Endothelial cell of umbilical vein (primary cell): ENCODE measurements at regions of chr19 and their contacts with region 1.

Region 1: GRCh38 chr19:45692187-45693105 is at the start of gene QPCTL:
- DNase-seq: peak; percentile 100
- H3K4me3 ChIP-seq: peak within 1 kb of the TSS; percentile 70 to 93 (median 85)
- H3K27ac ChIP-seq: peak within 1 kb of the TSS; percentile 82
- H3K4me1 ChIP-seq: peaks cover 9% of the 10 kb centered on the region
- H3K27me3 ChIP-seq: no peaks in the 10 kb centered on the region
- CTCF ChIP-seq: no peak
- POLR2A ChIP-seq: peak; percentile 76
- total RNA-seq, gene QPCTL: 15.3 and 17.6 TPM in 2 replicates

Region 2: GRCh38 chr19:45423589-45424190 is 268.8 kb before region 1 on chr19 and contains the start of gene ERCC1:
- CTCF ChIA-PET with region 1: no interaction called
- POLR2A ChIA-PET with region 1: no interaction called
- dilution Hi-C with region 1: no loop called
- intact Hi-C with region 1: loop called (anchors 5 kb)
- DNase-seq: peak; percentile 94
- H3K4me3 ChIP-seq: peak within 1 kb of the TSS; percentile 59 to 74 (median 73)
- H3K27ac ChIP-seq: peak within 1 kb of the TSS; percentile 100
- H3K4me1 ChIP-seq: peaks cover 30% of the 10 kb centered on the region
- H3K27me3 ChIP-seq: no peaks in the 10 kb centered on the region
- CTCF ChIP-seq: no peak
- POLR2A ChIP-seq: peak; percentile 61
- total RNA-seq, gene ERCC1: 81.8 and 82.6 TPM in 2 replicates

Region 3: DNA sequence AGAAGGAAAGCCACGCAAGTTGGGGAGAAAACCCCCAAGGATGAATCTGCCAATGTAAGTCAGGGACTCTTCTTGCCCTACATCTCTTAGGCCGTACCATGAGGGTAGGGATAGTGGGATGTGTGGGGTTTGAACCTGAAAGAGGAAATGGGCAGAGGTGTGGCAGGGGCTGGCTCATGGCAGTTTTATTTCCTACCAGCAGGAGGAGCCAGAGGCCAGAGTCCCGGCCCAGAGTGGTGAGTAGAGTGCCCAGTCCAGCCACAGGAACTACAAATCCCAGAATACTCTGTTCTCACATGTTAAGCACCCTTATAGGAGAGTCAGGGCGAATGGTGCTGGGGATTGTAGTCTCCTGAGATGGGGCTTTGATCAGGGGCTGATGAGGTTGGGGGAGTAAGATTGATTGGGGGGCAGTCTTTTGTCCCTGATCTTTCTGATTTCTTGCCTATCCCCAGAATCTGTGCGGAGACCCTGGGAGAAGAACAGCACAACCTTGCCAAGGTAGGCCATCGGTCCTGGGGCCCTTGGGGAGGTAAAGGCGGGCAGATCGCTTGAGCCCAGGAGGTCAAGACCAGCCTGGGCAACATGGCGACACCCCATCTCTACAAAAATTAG is 168.7 kb before region 1 on chr19:
- CTCF ChIA-PET with region 1: no interaction called
- POLR2A ChIA-PET with region 1: no interaction called
- dilution Hi-C with region 1: no loop called
- intact Hi-C with region 1: loop called (anchors 2 kb)
- DNase-seq: peak; percentile 86
- H3K4me3 ChIP-seq: no peak overlapping the region
- H3K27ac ChIP-seq: no peak overlapping the region
- H3K4me1 ChIP-seq: no peaks in the 10 kb centered on the region
- H3K27me3 ChIP-seq: no peaks in the 10 kb centered on the region
- CTCF ChIP-seq: peak; percentile 82 to 92
- POLR2A ChIP-seq: peak; percentile 46

Region 4: DNA sequence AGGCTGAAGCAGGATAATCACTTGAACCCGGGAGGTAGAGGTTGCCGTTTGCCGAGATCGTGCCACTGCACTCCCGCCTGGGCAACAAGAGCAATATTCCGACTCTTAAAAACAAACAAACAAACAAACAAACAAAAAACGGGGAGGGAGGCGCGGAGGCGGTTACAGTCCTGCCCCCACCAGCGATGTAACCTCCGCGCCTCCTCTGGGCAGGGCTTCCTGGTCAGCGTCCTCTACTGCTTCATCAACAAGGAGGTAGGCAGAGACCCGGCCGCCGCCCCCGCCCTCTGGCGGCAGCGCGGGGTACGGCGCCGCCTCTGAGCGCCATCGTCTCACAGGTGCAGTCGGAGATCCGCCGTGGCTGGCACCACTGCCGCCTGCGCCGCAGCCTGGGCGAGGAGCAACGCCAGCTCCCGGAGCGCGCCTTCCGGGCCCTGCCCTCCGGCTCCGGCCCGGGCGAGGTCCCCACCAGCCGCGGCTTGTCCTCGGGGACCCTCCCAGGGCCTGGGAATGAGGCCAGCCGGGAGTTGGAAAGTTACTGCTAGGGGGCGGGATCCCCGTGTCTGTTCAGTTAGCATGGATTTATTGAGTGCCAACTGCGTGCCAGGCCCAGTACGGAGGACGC is 10.9 kb before region 1 on chr19:
- CTCF ChIA-PET with region 1: interaction called, 55 read pairs
- POLR2A ChIA-PET with region 1: interaction called, 3 read pairs
- dilution Hi-C with region 1: no loop called
- intact Hi-C with region 1: loop called (anchors 1 kb)
- DNase-seq: peak; percentile 92
- H3K4me3 ChIP-seq: peak overlapping the region; percentile 23 to 55 (median 36)
- H3K27ac ChIP-seq: no peak overlapping the region
- H3K4me1 ChIP-seq: peaks cover 11% of the 10 kb centered on the region
- H3K27me3 ChIP-seq: no peaks in the 10 kb centered on the region
- CTCF ChIP-seq: peak; percentile 94 to 98
- POLR2A ChIP-seq: no peak

Region 5: GRCh38 chr19:45717166-45717982 is 24.9 kb after region 1 on chr19:
- CTCF ChIA-PET with region 1: interaction called, 15 read pairs
- POLR2A ChIA-PET with region 1: interaction called, 10 read pairs
- dilution Hi-C with region 1: no loop called
- intact Hi-C with region 1: loop called (anchors 1 kb)
- DNase-seq: peak; percentile 100
- H3K4me3 ChIP-seq: peak overlapping the region; percentile 54 to 93 (median 61)
- H3K27ac ChIP-seq: peak overlapping the region; percentile 43
- H3K4me1 ChIP-seq: peaks cover 20% of the 10 kb centered on the region
- H3K27me3 ChIP-seq: no peaks in the 10 kb centered on the region
- CTCF ChIP-seq: peak in 1 of 2 donors; percentile 33
- POLR2A ChIP-seq: no peak

Region 6: DNA sequence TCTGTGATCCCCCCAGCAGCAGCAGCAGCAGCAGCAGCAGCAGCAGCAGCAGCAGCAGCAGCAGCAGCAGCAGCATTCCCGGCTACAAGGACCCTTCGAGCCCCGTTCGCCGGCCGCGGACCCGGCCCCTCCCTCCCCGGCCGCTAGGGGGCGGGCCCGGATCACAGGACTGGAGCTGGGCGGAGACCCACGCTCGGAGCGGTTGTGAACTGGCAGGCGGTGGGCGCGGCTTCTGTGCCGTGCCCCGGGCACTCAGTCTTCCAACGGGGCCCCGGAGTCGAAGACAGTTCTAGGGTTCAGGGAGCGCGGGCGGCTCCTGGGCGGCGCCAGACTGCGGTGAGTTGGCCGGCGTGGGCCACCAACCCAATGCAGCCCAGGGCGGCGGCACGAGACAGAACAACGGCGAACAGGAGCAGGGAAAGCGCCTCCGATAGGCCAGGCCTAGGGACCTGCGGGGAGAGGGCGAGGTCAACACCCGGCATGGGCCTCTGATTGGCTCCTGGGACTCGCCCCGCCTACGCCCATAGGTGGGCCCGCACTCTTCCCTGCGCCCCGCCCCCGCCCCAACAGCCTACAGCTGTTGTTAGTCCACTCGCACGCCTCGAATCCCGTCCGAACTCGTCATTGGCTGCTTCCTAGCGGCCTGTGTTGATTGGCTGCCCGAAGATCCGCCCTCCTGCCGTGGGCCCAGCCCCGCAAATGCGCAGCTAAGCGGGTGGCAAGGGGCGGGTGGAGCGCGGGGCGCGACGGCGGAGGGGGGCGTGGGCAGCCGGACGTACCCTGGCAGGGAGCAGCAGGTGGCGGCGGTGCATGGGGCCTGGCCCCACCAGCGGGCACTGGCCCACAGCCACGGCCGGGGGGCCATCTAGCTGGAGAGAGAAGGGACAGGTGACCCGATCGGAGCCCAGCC is 78.0 kb after region 1 on chr19:
- CTCF ChIA-PET with region 1: interaction called, 56 read pairs
- POLR2A ChIA-PET with region 1: interaction called, 4 read pairs
- dilution Hi-C with region 1: no loop called
- intact Hi-C with region 1: loop called (anchors 1 kb)
- DNase-seq: peak; percentile 98
- H3K4me3 ChIP-seq: peak overlapping the region; percentile 13 to 49 (median 45)
- H3K27ac ChIP-seq: peak overlapping the region; percentile 21
- H3K4me1 ChIP-seq: peaks cover 14% of the 10 kb centered on the region
- H3K27me3 ChIP-seq: no peaks in the 10 kb centered on the region
- CTCF ChIP-seq: peak; percentile 92 to 98
- POLR2A ChIP-seq: peak; percentile 70

Region 7: DNA sequence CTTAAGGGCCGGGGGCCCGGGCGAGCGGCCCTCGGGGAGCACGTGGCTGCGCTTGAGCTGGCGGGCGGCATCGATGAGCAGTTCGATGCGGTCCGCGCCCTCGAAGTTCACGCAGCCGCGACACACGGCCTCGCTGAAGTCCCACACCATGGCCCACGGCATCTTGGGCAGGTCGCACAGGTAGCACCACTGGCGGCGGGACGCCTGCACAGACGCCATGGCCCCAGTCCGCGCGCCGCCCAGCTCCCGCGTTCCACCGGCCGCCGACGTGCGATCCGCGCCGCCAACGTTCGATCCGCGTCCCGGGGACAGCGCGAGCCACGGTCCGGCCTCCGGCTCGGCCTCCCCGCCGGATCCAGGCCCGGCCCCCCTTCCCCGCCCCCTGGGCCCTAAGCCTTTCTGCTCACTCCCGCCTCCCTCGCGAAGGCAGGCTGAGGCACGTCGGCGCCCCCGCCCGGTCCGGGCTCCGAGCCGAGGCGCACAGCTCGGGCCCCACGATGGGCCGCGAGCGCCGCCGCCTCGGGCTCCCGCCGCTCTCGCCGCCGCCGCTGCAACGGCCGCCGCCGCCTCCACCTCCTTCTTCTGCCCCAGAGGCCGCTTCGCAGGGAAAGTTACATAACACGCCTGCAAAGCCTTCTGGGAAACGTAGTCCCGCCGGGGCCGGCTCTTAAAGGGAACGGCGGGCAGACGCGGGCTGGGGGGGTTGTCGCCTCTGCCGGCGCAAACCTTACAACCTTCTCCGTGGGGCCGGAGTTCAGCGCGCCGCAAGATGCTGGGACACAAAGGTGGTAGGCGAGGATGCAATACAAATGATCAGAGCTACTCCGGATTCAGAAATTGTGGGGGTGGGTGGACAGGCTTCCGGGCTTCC is 193.3 kb after region 1 on chr19 and contains the start of gene IRF2BP1:
- CTCF ChIA-PET with region 1: no interaction called
- POLR2A ChIA-PET with region 1: no interaction called
- dilution Hi-C with region 1: no loop called
- intact Hi-C with region 1: no loop called
- DNase-seq: peak; percentile 89
- H3K4me3 ChIP-seq: peak within 1 kb of the TSS; percentile 48 to 94 (median 57)
- H3K27ac ChIP-seq: peak within 1 kb of the TSS; percentile 80
- H3K4me1 ChIP-seq: peaks cover 10% of the 10 kb centered on the region
- H3K27me3 ChIP-seq: no peaks in the 10 kb centered on the region
- CTCF ChIP-seq: no peak
- POLR2A ChIP-seq: no peak
- total RNA-seq, gene IRF2BP1: 17.1 and 17.5 TPM in 2 replicates